ENCODE measurements at regions of chr13 and their contacts with region 1.

Region 1: DNA sequence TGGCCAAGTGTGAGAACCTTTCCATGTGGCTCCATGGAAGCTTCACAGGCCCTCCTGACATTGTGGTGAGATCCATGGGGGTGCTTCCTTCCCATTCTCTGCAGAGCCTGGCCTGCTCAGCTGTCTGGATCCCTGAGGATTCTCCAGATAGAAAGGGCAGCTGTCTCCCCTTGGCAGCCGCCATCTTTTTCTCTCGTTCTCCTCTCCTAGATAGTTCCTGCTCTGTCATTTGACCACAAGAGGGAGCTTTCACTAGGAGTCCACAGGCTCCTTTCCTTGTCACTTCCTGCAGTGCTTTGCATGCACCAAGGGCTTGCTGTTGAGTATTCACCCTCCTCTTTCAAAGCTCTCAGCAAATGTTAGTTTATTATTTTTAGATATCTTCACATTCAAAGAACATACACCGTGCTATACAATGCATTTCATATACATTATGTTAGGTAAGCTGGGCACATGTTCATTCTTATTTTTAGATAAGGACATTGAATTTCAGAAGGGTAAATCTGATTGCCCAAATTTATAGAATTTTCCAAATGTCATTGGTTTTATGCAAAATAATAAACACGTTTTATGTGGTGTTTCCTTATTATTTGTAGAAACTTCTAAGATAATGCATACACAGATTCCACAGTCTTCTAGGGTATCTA is 133.2 kb downstream of the FRY start:
- DNase-seq: peak; percentile 46
- ATAC-seq: peak; percentile 99
- H3K4me3 Mint-ChIP-seq: no peak overlapping the region
- H3K27ac Mint-ChIP-seq: no peak overlapping the region
- H3K4me1 Mint-ChIP-seq: no peaks in the 10 kb centered on the region
- H3K27me3 Mint-ChIP-seq: no peaks in the 10 kb centered on the region
- CTCF ChIP-seq: peak; percentile 79

Region 2: GRCh38 chr13:32142956-32143375 is 21.8 kb before region 1 on chr13:
- CTCF ChIA-PET with region 1: interaction called, 10 read pairs
- POLR2A ChIA-PET with region 1: no interaction called
- DNase-seq: peak; percentile 30
- ATAC-seq: peak; percentile 99
- H3K4me3 Mint-ChIP-seq: peak overlapping the region; percentile 9; the same call in 1 of the 2 replicates
- H3K27ac Mint-ChIP-seq: peak overlapping the region; percentile 83
- H3K4me1 Mint-ChIP-seq: peaks cover 31% of the 10 kb centered on the region
- H3K27me3 Mint-ChIP-seq: no peaks in the 10 kb centered on the region
- CTCF ChIP-seq: no peak

Region 3: DNA sequence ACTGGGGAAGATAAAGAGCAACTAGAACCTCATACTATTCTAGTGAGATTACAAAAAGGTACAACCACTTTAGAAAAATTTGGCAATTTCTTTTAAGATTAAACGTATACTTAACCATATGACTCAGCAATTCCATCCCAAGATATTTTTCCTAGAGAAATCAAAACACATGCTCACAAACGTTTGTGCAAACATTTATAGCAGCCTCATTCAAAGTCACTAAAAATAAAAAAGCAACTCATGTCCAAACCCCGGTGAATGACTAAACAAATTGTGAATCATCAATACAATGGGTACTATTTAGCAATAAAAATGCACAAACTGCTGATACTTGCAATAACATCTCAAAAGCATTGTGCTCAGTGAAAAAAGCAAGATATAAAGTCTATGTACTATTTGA is 11.7 kb before region 1 on chr13:
- CTCF ChIA-PET with region 1: interaction called, 14 read pairs
- POLR2A ChIA-PET with region 1: no interaction called
- DNase-seq: no peak
- ATAC-seq: no peak
- H3K4me3 Mint-ChIP-seq: no peak overlapping the region
- H3K27ac Mint-ChIP-seq: 0 out of 2 replicates have a peak overlapping the region, but pooled peaks have one; percentile 65
- H3K4me1 Mint-ChIP-seq: 0 out of 2 replicates have a peak, but pooled peaks cover 2% of the 10 kb centered on the region
- H3K27me3 Mint-ChIP-seq: no peaks in the 10 kb centered on the region
- CTCF ChIP-seq: no peak

Region 4: GRCh38 chr13:32175307-32175706 is 10.6 kb after region 1 on chr13:
- CTCF ChIA-PET with region 1: interaction called, 36 read pairs
- POLR2A ChIA-PET with region 1: no interaction called
- DNase-seq: no peak
- ATAC-seq: no peak
- H3K4me3 Mint-ChIP-seq: no peak overlapping the region
- H3K27ac Mint-ChIP-seq: no peak overlapping the region
- H3K4me1 Mint-ChIP-seq: no peaks in the 10 kb centered on the region
- H3K27me3 Mint-ChIP-seq: no peaks in the 10 kb centered on the region
- CTCF ChIP-seq: no peak

Region 5: GRCh38 chr13:32214071-32214470 is 49.3 kb after region 1 on chr13:
- CTCF ChIA-PET with region 1: no interaction called
- POLR2A ChIA-PET with region 1: no interaction called
- DNase-seq: no peak
- ATAC-seq: no peak
- H3K4me3 Mint-ChIP-seq: no peak overlapping the region
- H3K27ac Mint-ChIP-seq: no peak overlapping the region
- H3K4me1 Mint-ChIP-seq: peaks cover 3% of the 10 kb centered on the region; the same call in 1 of the 2 replicates
- H3K27me3 Mint-ChIP-seq: no peaks in the 10 kb centered on the region
- CTCF ChIP-seq: no peak

Region 6: GRCh38 chr13:32234932-32235331 is 70.2 kb after region 1 on chr13:
- CTCF ChIA-PET with region 1: interaction called, 11 read pairs
- POLR2A ChIA-PET with region 1: no interaction called
- DNase-seq: no peak
- ATAC-seq: no peak
- H3K4me3 Mint-ChIP-seq: no peak overlapping the region
- H3K27ac Mint-ChIP-seq: no peak overlapping the region
- H3K4me1 Mint-ChIP-seq: 0 out of 2 replicates have a peak, but pooled peaks cover 3% of the 10 kb centered on the region
- H3K27me3 Mint-ChIP-seq: no peaks in the 10 kb centered on the region
- CTCF ChIP-seq: no peak

Region 7: GRCh38 chr13:32246468-32246867 is 81.7 kb after region 1 on chr13:
- CTCF ChIA-PET with region 1: interaction called, 13 read pairs
- POLR2A ChIA-PET with region 1: no interaction called
- DNase-seq: peak; percentile 81
- ATAC-seq: peak; percentile 100
- H3K4me3 Mint-ChIP-seq: no peak overlapping the region
- H3K27ac Mint-ChIP-seq: no peak overlapping the region
- H3K4me1 Mint-ChIP-seq: peaks cover 4% of the 10 kb centered on the region
- H3K27me3 Mint-ChIP-seq: no peaks in the 10 kb centered on the region
- CTCF ChIP-seq: peak; percentile 54

Region 8: DNA sequence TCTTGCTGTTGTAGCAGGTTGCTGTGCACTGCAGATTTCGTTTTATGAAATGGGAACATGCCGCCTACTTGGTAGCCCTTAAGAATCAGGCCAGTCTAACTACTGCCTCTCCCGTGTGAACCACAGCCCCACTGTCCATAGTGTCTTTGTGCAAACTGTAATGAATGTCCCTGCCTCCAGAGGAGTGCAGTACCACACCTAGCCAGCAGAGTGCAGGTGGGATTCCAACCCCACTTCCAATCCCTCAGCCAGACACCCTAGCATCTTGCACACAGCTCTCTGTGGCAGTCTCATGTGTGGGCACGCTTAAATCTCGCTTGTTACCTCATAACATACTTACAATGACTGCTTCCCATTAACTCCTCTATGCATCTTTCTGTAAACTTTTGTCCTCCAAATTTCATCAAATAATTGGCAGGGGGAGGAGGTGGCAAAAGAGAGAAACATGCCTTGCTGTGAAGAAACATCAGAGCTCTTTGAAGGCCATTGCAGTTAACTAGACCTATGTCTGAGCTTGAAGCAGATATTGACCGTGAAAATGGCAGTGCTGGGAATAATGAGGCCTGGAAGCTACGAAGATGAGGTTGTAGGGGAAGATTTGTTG is 103.2 kb after region 1 on chr13:
- CTCF ChIA-PET with region 1: interaction called, 11 read pairs
- POLR2A ChIA-PET with region 1: no interaction called
- DNase-seq: peak; percentile 85
- ATAC-seq: peak; percentile 100
- H3K4me3 Mint-ChIP-seq: no peak overlapping the region
- H3K27ac Mint-ChIP-seq: 0 out of 2 replicates have a peak overlapping the region, but pooled peaks have one; percentile 39
- H3K4me1 Mint-ChIP-seq: no peaks in the 10 kb centered on the region
- H3K27me3 Mint-ChIP-seq: no peaks in the 10 kb centered on the region
- CTCF ChIP-seq: peak; percentile 98

Region 9: GRCh38 chr13:32549788-32550187 is 385.0 kb after region 1 on chr13:
- CTCF ChIA-PET with region 1: no interaction called
- POLR2A ChIA-PET with region 1: no interaction called
- DNase-seq: no peak
- ATAC-seq: no peak
- H3K4me3 Mint-ChIP-seq: no peak overlapping the region
- H3K27ac Mint-ChIP-seq: no peak overlapping the region
- H3K4me1 Mint-ChIP-seq: no peaks in the 10 kb centered on the region
- H3K27me3 Mint-ChIP-seq: no peaks in the 10 kb centered on the region; the same call in 1 of the 2 replicates
- CTCF ChIP-seq: no peak